IMR-90 (cell line): ENCODE measurements at regions of chr1 and their contacts with region 1.

Region 1: GRCh38 chr1:15046487-15047165 is 106.9 kb upstream of the TMEM51 start:
- DNase-seq: peak; percentile 81
- ATAC-seq: peak; percentile 97
- H3K4me3 ChIP-seq: no peak overlapping the region
- H3K27ac ChIP-seq: peak overlapping the region; percentile 62; the same call in 1 of the 2 replicates
- H3K4me1 ChIP-seq: peaks cover 2% of the 10 kb centered on the region; the same call in 1 of the 2 replicates
- H3K27me3 ChIP-seq: no peaks in the 10 kb centered on the region
- CTCF ChIP-seq: peak; percentile 95
- POLR2A ChIP-seq: peak; percentile 44; the same call in 1 of the 2 replicates
- RAD21 ChIP-seq: peak; percentile 98

Region 2: DNA sequence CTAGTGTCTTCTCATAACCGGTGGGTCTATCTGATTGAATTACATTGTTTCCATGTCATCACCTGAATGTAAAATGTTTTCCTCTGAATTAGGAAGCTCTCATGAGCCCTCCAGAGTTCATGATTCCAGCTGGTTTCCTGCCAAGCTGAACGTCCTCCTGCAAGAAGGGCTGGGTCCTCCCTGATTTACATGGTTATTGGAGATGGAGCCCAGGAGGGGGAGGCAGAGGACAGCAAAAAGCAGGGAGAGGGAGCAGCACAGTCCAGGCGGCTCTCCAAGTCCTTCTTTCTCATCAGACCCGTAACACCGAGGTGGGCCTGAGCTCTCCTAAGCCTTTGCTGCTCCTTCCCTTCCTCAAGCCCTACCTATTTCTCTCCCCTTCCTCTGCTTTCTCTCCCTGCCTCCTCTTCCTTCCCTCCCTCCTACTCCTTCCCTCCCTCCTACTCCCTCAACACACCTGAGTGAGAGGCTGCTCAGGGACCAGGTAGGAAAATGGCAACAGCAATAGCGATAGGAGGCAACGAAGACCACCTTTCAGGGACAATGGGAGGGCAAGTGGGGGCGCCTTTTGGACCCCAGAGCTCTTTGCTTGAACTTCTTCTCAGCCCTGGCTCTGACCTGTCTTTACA is 1080.7 kb before region 1 on chr1:
- CTCF ChIA-PET with region 1: no interaction called
- POLR2A ChIA-PET with region 1: no interaction called
- dilution Hi-C with region 1: no loop called
- in situ Hi-C with region 1: loop called (anchors 10 kb)
- intact Hi-C with region 1: loop called (anchors 2 kb)
- DNase-seq: peak; percentile 26
- ATAC-seq: peak; percentile 77
- H3K4me3 ChIP-seq: no peak overlapping the region
- H3K27ac ChIP-seq: no peak overlapping the region
- H3K4me1 ChIP-seq: no peaks in the 10 kb centered on the region
- H3K27me3 ChIP-seq: no peaks in the 10 kb centered on the region
- CTCF ChIP-seq: peak; percentile 43
- POLR2A ChIP-seq: no peak
- RAD21 ChIP-seq: peak; percentile 57

Region 3: DNA sequence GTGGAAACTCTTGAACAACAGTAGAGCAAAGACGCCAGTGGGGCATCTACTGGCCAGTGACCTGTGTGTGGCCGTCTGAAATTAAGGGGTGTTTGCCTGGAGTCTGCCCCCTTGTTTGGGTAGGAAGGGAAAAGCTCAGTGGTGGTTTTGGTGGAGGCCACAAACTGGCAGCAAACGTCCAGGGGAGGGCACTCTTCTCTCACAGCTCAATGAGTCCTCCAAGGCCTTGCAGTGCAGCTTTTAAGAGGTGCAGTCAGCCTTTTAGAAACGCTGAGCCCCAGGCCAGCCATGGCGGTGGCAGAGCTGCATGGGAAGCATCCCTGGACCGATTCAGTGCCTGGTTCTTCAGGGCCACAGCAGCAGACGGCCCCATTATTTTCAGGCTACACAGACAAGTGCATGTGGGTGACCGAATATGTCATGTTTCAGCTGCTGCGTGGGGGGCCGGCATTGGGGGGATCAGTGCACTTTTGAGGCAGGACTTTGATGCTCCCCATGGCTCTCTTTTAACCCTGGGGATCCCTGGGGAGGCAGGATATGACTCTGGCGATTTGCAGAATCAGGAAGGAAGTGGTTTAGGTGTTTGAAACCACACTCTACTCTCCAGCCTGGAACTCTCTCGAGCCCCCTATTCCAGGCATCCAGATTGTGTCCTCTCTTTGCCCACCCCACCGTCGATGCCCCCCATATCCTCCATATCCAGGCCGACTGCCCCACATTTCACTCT is 932.6 kb before region 1 on chr1:
- CTCF ChIA-PET with region 1: no interaction called
- POLR2A ChIA-PET with region 1: no interaction called
- dilution Hi-C with region 1: no loop called
- in situ Hi-C with region 1: no loop called
- intact Hi-C with region 1: loop called (anchors 5 kb)
- DNase-seq: peak; percentile 13
- ATAC-seq: peak; percentile 63
- H3K4me3 ChIP-seq: no peak overlapping the region
- H3K27ac ChIP-seq: no peak overlapping the region
- H3K4me1 ChIP-seq: no peaks in the 10 kb centered on the region
- H3K27me3 ChIP-seq: no peaks in the 10 kb centered on the region
- CTCF ChIP-seq: no peak
- POLR2A ChIP-seq: no peak
- RAD21 ChIP-seq: no peak

Region 4: DNA sequence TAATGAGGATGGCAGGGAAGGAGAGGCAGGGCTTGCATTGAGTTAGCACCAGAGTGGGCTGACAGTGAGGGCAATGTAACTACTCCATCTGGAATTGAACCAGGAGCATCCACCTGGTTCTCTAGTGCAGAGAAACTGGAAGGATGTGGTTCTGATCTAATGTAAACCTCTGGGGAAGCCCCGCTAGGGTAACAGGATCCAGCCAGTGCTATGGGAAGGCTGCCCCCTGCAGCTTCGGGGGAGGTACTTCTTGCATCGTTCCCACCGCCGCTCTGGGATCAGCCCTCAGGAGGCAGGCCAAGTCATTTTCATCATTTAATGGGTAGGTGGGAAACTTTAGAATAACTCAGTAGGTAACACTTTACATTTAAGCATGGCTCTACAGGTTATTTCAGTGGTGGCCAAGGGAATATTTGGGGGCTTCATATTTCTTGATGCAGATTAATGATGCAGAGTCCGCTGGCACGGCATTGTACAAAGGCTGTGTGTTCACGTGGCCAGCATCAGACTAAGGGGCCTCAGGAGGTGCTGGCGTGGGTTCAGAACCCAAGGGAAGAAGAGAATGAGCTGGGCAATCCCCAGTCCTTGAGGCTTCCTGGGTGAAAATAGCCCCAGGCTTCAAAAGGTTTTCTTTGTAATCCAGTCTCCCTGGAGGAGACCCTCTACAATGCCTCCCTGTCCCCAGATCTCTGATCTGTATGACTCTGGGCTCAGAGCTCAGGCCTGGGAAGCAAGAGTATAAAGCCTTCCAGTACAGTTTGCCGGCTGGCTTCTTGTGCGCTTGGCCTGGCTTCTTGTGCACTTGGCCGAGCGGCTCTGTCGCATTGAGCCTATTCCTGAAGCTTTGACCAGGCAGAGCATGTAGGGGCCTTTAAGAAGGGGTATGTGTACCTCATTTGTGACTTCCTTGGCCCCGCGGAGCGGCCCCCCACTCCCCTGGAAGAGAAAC is 474.5 kb before region 1 on chr1:
- CTCF ChIA-PET with region 1: no interaction called
- POLR2A ChIA-PET with region 1: no interaction called
- dilution Hi-C with region 1: no loop called
- in situ Hi-C with region 1: no loop called
- intact Hi-C with region 1: loop called (anchors 10 kb)
- DNase-seq: no peak
- ATAC-seq: no peak
- H3K4me3 ChIP-seq: no peak overlapping the region
- H3K27ac ChIP-seq: no peak overlapping the region
- H3K4me1 ChIP-seq: no peaks in the 10 kb centered on the region; the same call in 1 of the 2 replicates
- H3K27me3 ChIP-seq: no peaks in the 10 kb centered on the region
- CTCF ChIP-seq: no peak
- POLR2A ChIP-seq: no peak
- RAD21 ChIP-seq: no peak

Region 5: GRCh38 chr1:14778898-14779865 is 267.4 kb before region 1 on chr1:
- CTCF ChIA-PET with region 1: interaction called, 3 read pairs
- POLR2A ChIA-PET with region 1: no interaction called
- dilution Hi-C with region 1: no loop called
- in situ Hi-C with region 1: loop called (anchors 5 kb)
- intact Hi-C with region 1: loop called (anchors 1 kb)
- DNase-seq: peak; percentile 15
- ATAC-seq: peak; percentile 77
- H3K4me3 ChIP-seq: no peak overlapping the region
- H3K27ac ChIP-seq: no peak overlapping the region
- H3K4me1 ChIP-seq: no peaks in the 10 kb centered on the region
- H3K27me3 ChIP-seq: no peaks in the 10 kb centered on the region
- CTCF ChIP-seq: peak; percentile 60
- POLR2A ChIP-seq: no peak
- RAD21 ChIP-seq: peak; percentile 70

Region 6: GRCh38 chr1:14923727-14924452 is 122.7 kb before region 1 on chr1:
- CTCF ChIA-PET with region 1: interaction called, 3 read pairs
- POLR2A ChIA-PET with region 1: no interaction called
- dilution Hi-C with region 1: no loop called
- in situ Hi-C with region 1: no loop called
- intact Hi-C with region 1: loop called (anchors 1 kb)
- DNase-seq: peak; percentile 71
- ATAC-seq: peak; percentile 73
- H3K4me3 ChIP-seq: peak overlapping the region; percentile 79
- H3K27ac ChIP-seq: peak overlapping the region; percentile 40; the same call in 1 of the 2 replicates
- H3K4me1 ChIP-seq: peaks cover 20% of the 10 kb centered on the region
- H3K27me3 ChIP-seq: no peaks in the 10 kb centered on the region; the same call in 1 of the 2 replicates
- CTCF ChIP-seq: no peak
- POLR2A ChIP-seq: no peak
- RAD21 ChIP-seq: no peak

Region 7: GRCh38 chr1:14987829-14988603 is 58.6 kb before region 1 on chr1:
- CTCF ChIA-PET with region 1: no interaction called
- POLR2A ChIA-PET with region 1: no interaction called
- dilution Hi-C with region 1: no loop called
- in situ Hi-C with region 1: no loop called
- intact Hi-C with region 1: no loop called
- DNase-seq: no peak
- ATAC-seq: no peak; the same call in 1 of the 2 replicates
- H3K4me3 ChIP-seq: no peak overlapping the region
- H3K27ac ChIP-seq: no peak overlapping the region
- H3K4me1 ChIP-seq: no peaks in the 10 kb centered on the region
- H3K27me3 ChIP-seq: no peaks in the 10 kb centered on the region
- CTCF ChIP-seq: no peak
- POLR2A ChIP-seq: no peak
- RAD21 ChIP-seq: no peak